ENCODE measurements at regions of chr16 and their contacts with region 1.

Region 1: GRCh38 chr16:46727184-46727583 is 21.0 kb downstream of the MYLK3 start:
- DNase-seq: no peak
- H3K4me3 ChIP-seq: no peak overlapping the region
- H3K27ac ChIP-seq: no peak overlapping the region
- H3K4me1 ChIP-seq: no peaks in the 10 kb centered on the region
- CTCF ChIP-seq: no peak

Region 2: DNA sequence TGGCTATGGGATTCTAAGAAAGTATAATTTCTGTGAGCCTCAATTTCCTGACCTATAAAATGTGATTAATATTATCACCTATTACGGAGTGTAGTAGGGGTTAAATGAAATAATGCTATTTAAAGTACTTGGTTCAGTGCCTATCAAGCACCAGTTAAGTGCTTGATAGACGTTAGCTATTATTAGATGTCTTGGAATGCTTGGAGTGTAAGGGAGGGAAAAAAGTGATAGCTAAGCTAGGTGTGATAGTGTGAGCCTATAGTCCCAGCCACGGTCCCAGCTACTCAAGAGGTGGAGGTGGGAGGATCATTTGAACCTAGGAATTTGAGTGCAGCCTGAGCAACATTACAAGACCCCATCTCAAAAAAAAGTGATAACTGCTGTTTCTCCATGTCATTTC is 30.2 kb before region 1 on chr16:
- CTCF ChIA-PET with region 1: no interaction called
- POLR2A ChIA-PET with region 1: no interaction called
- intact Hi-C with region 1: loop called (anchors 2 kb)
- DNase-seq: no peak
- H3K4me3 ChIP-seq: no peak overlapping the region
- H3K27ac ChIP-seq: no peak overlapping the region
- H3K4me1 ChIP-seq: peaks cover 6% of the 10 kb centered on the region
- CTCF ChIP-seq: no peak

Measured in OCI-LY7 (cell line).